Naive thymus-derived CD4-positive, alpha-beta T cell (primary cell): ENCODE measurements at regions of chr22 and their contacts with region 1.

Region 1: DNA sequence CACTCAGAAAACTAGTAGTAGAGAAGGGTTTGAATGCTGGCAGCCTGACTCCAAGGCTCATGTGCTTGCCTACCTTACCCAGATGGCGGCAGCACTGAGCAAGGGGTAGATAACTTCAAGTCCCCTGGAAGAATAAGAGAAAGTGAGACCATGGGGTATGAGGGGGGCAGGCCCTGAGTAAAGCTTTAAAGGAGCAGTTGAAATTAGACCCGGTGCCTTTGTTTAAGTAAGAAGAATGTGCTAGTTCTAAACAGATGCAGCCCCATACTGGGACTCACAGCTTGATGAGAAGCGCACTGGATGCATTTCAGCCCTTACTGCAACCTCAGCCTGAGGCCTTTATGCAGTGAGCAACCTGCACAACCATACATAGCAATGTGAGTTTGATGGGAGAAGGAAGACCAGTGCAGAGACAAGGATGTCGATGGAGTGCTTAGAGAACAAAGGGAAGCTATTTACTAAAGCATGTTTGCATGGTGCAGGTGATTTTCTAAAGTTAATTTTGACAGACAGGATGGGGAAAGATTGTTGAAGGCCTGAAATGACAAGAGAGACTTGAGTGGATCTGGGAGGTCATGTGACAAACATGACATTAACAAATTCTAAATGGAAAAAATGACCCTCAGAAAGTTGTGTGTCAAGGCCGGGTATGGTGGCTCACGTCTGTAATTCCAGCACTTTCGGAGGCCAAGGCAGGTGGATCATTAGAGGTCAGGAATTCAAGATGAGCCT is 27.1 kb upstream of the TMA7B start:
- DNase-seq: peak in 5 of 9 donors; percentile 40 to 56 (median 52)
- ATAC-seq: peak; percentile 71
- H3K4me3 ChIP-seq: peak overlapping the region; percentile 22
- H3K4me3 Mint-ChIP-seq: peak overlapping the region; percentile 53 to 98 (median 80)
- H3K27ac ChIP-seq: peak overlapping the region; percentile 79
- H3K27ac Mint-ChIP-seq: peak overlapping the region in 6 of 9 donors; percentile 81 to 99 (median 97)
- H3K4me1 ChIP-seq: peaks cover 95 to 96% of the 10 kb centered on the region in 2 donors
- H3K4me1 Mint-ChIP-seq: peaks cover 50 to 55% (median 55%) of the 10 kb centered on the region in 7 donors
- H3K27me3 ChIP-seq: no peaks in the 10 kb centered on the region
- H3K27me3 Mint-ChIP-seq: no peaks in the 10 kb centered on the region

Region 2: GRCh38 chr22:39773976-39774539 is 159.0 kb before region 1 on chr22:
- CTCF ChIA-PET with region 1: no interaction called
- POLR2A ChIA-PET with region 1: no interaction called
- intact Hi-C with region 1: loop called in 1 of 2 experiments (anchors 5 kb)
- DNase-seq: peak in 8 of 9 donors; percentile 16 to 51 (median 40)
- ATAC-seq: peak; percentile 88
- H3K4me3 ChIP-seq: no peak overlapping the region
- H3K4me3 Mint-ChIP-seq: peak overlapping the region; percentile 3 to 75 (median 62)
- H3K27ac ChIP-seq: no peak overlapping the region
- H3K27ac Mint-ChIP-seq: peak overlapping the region; percentile 51 to 83 (median 80)
- H3K4me1 ChIP-seq: peaks cover 7 to 24% of the 10 kb centered on the region in 2 donors
- H3K4me1 Mint-ChIP-seq: peaks cover 22 to 60% (median 55%) of the 10 kb centered on the region in 7 donors
- H3K27me3 ChIP-seq: no peaks in the 10 kb centered on the region
- H3K27me3 Mint-ChIP-seq: no peaks in the 10 kb centered on the region

Region 3: DNA sequence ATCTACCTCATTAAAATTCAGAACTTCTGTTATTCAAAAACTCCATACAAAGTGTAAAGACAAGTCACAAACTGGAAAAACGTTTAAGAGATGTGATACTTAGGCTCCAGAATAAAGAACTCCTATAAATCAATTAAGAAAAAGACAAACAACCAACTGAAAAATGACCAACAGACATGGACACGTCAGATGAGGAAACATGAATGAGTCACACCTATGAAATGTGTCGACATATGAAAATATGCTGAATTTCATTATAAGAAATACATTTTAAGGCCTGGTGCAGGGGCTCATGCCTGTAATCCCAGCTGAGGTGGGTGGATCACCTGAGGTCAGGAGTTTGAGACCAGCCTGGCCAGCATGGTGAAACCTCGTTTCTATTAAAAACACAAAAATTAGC is 118.2 kb before region 1 on chr22:
- CTCF ChIA-PET with region 1: no interaction called
- POLR2A ChIA-PET with region 1: no interaction called
- intact Hi-C with region 1: no loop called
- DNase-seq: no peak
- ATAC-seq: no peak
- H3K4me3 ChIP-seq: no peak overlapping the region
- H3K4me3 Mint-ChIP-seq: no peak overlapping the region
- H3K27ac ChIP-seq: no peak overlapping the region
- H3K27ac Mint-ChIP-seq: no peak overlapping the region
- H3K4me1 ChIP-seq: no peaks in the 10 kb centered on the region
- H3K4me1 Mint-ChIP-seq: peaks cover 0 to 4% (median 0%) of the 10 kb centered on the region in 7 donors
- H3K27me3 ChIP-seq: peaks cover 0 to 4% of the 10 kb centered on the region in 2 donors
- H3K27me3 Mint-ChIP-seq: peaks cover 0 to 47% (median 0%) of the 10 kb centered on the region in 5 donors

Region 4: GRCh38 chr22:39908737-39909136 is 24.3 kb before region 1 on chr22:
- CTCF ChIA-PET with region 1: interaction called, 8 read pairs
- POLR2A ChIA-PET with region 1: interaction called, 350 read pairs
- intact Hi-C with region 1: loop called (anchors 1 to 5 kb)
- DNase-seq: peak in 1 of 9 donors; percentile 50
- ATAC-seq: peak; percentile 45
- H3K4me3 ChIP-seq: peak overlapping the region; percentile 67
- H3K4me3 Mint-ChIP-seq: peak overlapping the region in 9 of 10 donors; percentile 93 to 99 (median 97)
- H3K27ac ChIP-seq: peak overlapping the region; percentile 83
- H3K27ac Mint-ChIP-seq: peak overlapping the region in 6 of 9 donors; percentile 86 to 98 (median 92)
- H3K4me1 ChIP-seq: peaks cover 53 to 65% of the 10 kb centered on the region in 2 donors
- H3K4me1 Mint-ChIP-seq: peaks cover 62 to 88% (median 76%) of the 10 kb centered on the region in 7 donors
- H3K27me3 ChIP-seq: no peaks in the 10 kb centered on the region
- H3K27me3 Mint-ChIP-seq: no peaks in the 10 kb centered on the region

Region 5: GRCh38 chr22:39917776-39918495 is 15.1 kb before region 1 on chr22:
- CTCF ChIA-PET with region 1: interaction called, 9 read pairs
- POLR2A ChIA-PET with region 1: interaction called, 350 read pairs
- intact Hi-C with region 1: loop called in 1 of 2 experiments (anchors 1 kb)
- DNase-seq: peak in 1 of 9 donors; percentile 11
- ATAC-seq: no peak
- H3K4me3 ChIP-seq: peak overlapping the region; percentile 34
- H3K4me3 Mint-ChIP-seq: peak overlapping the region in 9 of 10 donors; percentile 71 to 97 (median 79)
- H3K27ac ChIP-seq: peak overlapping the region; percentile 78
- H3K27ac Mint-ChIP-seq: peak overlapping the region in 6 of 9 donors; percentile 82 to 98 (median 95)
- H3K4me1 ChIP-seq: peaks cover 82 to 91% of the 10 kb centered on the region in 2 donors
- H3K4me1 Mint-ChIP-seq: peaks cover 67 to 99% (median 94%) of the 10 kb centered on the region in 7 donors
- H3K27me3 ChIP-seq: no peaks in the 10 kb centered on the region
- H3K27me3 Mint-ChIP-seq: no peaks in the 10 kb centered on the region